RWPE1 (cell line): ENCODE measurements at regions of chr7 and their contacts with region 1.

Region 1: GRCh38 chr7:149742075-149742701 is 31.2 kb downstream of the ZNF467 start:
- DNase-seq: peak; percentile 67
- H3K27ac ChIP-seq: no peak overlapping the region
- CTCF ChIP-seq: peak; percentile 98

Region 2: GRCh38 chr7:149598721-149599306 is 143.4 kb before region 1 on chr7:
- CTCF ChIA-PET with region 1: no interaction called
- POLR2A ChIA-PET with region 1: no interaction called
- DNase-seq: peak; percentile 22
- H3K27ac ChIP-seq: no peak overlapping the region
- CTCF ChIP-seq: no peak

Region 3: DNA sequence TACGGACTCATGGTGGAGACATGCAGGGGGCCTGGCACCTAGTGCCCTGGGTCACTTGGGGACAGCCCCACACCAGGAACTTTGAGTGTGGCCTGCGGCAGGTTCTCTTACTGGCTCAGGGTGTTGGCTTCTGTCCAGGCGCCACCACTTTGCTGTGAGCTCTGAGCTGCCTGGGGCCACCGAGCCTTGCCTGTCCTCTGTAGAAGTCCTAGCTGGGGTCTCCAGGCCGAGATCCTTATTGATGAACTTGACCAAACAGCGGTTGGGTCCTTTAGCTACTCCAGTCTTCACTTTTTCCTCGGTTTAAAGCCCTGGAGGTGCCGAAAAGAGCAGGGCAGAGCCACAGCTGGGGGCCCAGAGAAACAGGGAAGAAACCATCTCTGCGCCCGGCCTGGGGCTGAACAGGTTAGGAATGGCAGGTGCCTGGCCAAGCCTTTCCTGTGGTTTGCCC is 10.1 kb before region 1 on chr7:
- CTCF ChIA-PET with region 1: interaction called, 13 read pairs
- POLR2A ChIA-PET with region 1: no interaction called
- DNase-seq: no peak
- H3K27ac ChIP-seq: no peak overlapping the region
- CTCF ChIP-seq: no peak